MCF 10A (cell line): ENCODE measurements at regions of chr7 and their contacts with region 1.

Region 1: DNA sequence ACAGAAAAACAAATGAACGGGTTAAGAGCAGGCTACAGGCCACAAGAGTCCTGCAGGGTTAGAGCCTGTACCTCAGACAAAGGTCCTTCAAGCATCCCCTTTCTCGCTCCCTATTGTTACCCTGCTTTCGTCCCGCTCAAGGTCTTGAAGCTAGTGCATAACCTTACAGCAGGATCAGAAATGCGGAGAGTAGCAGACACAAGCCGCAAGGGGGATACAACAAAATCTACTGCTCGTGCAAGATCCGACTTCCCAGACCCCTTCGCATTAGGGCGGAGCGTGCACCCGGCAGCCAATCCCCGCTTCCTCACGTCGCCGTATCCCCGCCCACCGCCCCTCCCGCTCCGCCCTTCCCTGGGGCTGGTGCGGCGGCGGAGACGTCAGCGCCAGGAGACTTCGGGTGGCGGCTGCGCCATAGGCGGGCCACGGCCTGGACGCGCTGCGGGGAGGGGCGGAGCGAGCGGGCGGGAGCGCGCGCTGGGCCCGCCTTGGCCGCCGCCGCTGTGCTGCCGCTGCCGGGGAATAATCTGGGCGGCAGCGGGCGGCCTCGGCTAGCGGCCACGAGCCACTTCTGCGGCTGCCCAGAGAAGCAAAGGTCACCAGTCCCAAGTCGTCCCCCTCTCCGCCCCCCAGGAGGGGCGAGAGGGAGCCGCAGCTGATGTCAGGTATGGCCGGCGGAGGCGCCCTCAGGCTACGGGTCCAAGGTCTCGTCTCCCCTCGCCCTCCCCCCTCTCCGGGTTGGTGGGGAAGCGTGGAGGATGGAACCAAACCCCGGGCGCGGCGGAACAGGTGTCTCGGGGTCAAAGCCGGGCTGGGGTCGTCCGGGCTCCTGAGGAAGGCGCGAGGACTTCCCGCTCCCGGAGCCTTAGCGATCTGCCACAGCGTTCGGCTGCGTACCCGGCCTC is at the start of gene C1GALT1:
- DNase-seq: peak; percentile 98
- H3K4me3 Mint-ChIP-seq: peak within 1 kb of the TSS; percentile 98
- H3K27ac Mint-ChIP-seq: peak within 1 kb of the TSS; percentile 94
- H3K4me1 Mint-ChIP-seq: peaks cover 26% of the 10 kb centered on the region
- H3K27me3 Mint-ChIP-seq: no peaks in the 10 kb centered on the region
- CTCF ChIP-seq: peak; percentile 17
- total RNA-seq, gene C1GALT1: 30.9 and 39.6 TPM in 2 replicates

Region 2: DNA sequence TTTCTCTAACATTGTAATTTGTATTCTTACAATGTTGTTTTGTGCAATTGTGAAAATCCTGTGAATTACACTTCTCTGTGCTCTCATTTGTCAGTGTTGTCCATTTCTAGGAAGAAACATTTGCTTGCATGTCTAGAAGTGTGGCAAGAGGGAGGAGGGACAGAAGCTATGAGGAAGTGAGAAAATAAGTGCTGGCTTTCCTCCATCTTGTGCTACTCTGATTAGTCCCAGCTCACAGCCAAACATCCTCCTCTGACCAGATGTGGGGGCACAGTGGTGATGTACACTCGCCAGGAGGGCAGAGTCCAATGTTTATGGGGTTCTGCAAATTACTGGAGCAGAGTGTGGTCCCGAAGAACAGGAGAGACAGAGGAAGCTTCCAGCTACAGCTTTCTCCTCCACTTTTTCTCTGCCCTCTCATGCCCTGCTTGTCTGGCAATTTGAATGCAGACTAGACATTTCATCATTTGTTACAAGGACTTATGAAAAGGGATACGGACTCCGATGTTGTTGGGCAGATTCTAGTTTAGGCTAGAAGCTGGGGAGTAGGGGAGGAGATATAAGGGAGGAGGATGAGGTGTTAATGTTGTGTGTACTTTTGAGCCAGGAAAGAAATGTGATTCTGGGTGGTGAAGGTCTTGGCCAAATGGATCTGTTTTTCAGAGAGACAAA is 131.1 kb before region 1 on chr7:
- CTCF ChIA-PET with region 1: no interaction called
- POLR2A ChIA-PET with region 1: no interaction called
- intact Hi-C with region 1: no loop called
- DNase-seq: no peak
- H3K4me3 Mint-ChIP-seq: no peak overlapping the region
- H3K27ac Mint-ChIP-seq: no peak overlapping the region
- H3K4me1 Mint-ChIP-seq: no peaks in the 10 kb centered on the region
- H3K27me3 Mint-ChIP-seq: no peaks in the 10 kb centered on the region
- CTCF ChIP-seq: no peak

Region 3: DNA sequence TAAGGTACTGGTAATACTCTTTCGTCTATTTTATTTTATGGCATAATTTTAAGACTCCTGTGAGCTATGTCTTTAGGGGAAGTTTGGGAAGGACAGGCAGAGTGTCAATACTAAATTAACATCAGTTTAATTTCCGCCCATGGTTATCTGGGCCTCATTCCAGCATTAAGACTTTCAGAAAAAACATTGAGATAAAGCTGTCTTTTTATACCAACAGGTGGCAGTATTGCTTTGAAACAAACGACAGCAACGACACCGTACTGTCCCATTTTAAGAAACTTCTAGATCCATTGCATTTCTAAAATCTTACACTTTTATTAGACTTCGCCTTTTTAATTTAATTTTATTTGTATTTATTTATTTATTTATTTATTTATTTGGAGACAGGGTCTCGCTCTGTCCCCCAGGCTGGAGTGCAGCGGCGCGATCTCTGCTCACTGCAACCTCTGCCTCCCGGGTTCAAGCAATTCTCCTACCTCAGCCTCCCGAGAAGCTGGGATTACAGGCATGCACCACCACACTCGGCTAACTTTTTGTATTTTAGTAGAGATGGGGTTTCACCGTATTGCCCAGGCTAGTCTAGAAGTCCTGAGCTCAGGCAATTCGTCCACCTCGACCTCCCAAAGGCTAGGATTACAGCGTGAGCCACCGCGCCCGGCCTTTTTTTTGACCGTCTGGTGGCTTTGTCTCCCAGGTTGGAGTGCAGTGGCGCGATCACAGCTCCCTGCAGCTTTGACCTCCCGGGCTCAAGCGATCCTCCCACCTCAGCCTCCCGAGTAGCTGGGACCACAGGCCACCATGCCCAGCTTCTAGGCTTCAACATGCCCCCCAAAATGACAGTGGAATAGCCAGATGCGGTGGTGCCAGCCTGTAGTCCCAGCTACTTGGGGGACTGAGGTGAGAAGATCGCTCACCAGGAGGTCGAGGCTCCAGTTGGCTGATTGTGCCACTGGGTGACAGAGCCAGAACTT is 78.8 kb before region 1 on chr7:
- CTCF ChIA-PET with region 1: interaction called, 111 read pairs
- POLR2A ChIA-PET with region 1: interaction called, 119 read pairs
- intact Hi-C with region 1: loop called (anchors 1 kb)
- DNase-seq: peak; percentile 73
- H3K4me3 Mint-ChIP-seq: no peak overlapping the region
- H3K27ac Mint-ChIP-seq: no peak overlapping the region
- H3K4me1 Mint-ChIP-seq: peaks cover 32% of the 10 kb centered on the region
- H3K27me3 Mint-ChIP-seq: no peaks in the 10 kb centered on the region
- CTCF ChIP-seq: peak; percentile 52

Region 4: DNA sequence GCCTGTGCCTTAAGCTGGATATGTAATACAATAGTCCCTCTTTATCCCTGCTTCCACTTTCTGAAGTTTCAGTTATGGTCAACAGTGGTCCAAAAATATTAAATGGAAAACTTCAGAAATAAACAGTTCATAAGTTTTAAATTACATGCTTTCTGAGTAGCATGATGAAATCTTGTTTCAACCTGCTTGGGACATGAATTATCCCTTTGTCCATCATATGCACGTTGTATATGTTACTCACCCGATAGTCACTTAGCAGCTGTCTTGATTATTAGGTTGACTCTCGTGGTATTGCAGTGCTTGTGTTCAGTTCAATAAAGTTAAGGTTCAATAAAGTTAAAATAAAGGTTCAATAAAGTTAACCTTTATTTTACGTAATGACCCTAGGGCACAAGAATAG is 25.5 kb after region 1 on chr7:
- CTCF ChIA-PET with region 1: interaction called, 3 read pairs
- POLR2A ChIA-PET with region 1: interaction called, 23 read pairs
- intact Hi-C with region 1: no loop called
- DNase-seq: peak; percentile 53
- H3K4me3 Mint-ChIP-seq: peak overlapping the region; percentile 25
- H3K27ac Mint-ChIP-seq: peak overlapping the region; percentile 62
- H3K4me1 Mint-ChIP-seq: peaks cover 22% of the 10 kb centered on the region
- H3K27me3 Mint-ChIP-seq: no peaks in the 10 kb centered on the region
- CTCF ChIP-seq: no peak

Region 5: DNA sequence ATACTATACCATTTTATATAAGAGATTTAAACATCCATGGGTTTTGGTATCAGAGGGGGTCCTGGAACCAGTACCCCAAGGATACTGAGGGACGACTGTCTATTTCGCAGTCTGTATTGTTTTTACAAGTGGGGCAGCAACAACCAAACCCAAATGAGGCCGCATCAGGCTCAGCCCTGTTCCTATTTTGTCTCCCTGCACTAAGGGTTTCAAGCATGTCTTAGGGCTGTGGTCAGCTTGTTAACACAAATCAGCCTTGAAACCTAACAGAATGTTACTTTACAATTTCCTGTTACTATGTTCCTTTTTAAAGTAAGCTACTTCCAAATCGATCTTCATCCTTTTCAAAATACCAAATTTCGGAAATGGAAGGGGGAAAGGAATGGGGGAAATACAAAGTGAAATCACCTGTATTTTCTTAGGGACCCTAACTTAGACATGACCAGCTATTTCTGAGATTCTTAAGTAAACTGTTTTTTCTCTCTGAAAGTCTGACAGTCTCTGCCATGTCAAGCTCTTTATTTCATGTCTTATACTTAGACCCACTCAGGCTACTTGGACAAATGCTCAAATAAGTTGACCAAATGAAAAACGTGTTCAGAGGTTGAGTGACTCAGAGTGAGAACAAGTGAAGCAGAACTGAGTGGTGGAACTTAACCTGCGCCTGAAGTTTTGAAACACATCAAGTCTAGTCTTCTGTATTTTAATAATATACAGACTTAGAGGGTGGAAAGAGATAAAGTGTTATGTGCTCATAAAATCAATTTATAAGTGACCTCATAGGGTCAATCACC is 75.7 kb after region 1 on chr7:
- CTCF ChIA-PET with region 1: interaction called, 3 read pairs
- POLR2A ChIA-PET with region 1: no interaction called
- intact Hi-C with region 1: loop called (anchors 5 kb)
- DNase-seq: no peak
- H3K4me3 Mint-ChIP-seq: no peak overlapping the region
- H3K27ac Mint-ChIP-seq: no peak overlapping the region
- H3K4me1 Mint-ChIP-seq: no peaks in the 10 kb centered on the region
- H3K27me3 Mint-ChIP-seq: no peaks in the 10 kb centered on the region
- CTCF ChIP-seq: no peak

Region 6: GRCh38 chr7:7424151-7424873 is 241.9 kb after region 1 on chr7:
- CTCF ChIA-PET with region 1: interaction called, 4 read pairs
- POLR2A ChIA-PET with region 1: interaction called, 5 read pairs
- intact Hi-C with region 1: loop called (anchors 5 kb)
- DNase-seq: peak; percentile 85
- H3K4me3 Mint-ChIP-seq: peak overlapping the region; percentile 52
- H3K27ac Mint-ChIP-seq: no peak overlapping the region
- H3K4me1 Mint-ChIP-seq: peaks cover 20% of the 10 kb centered on the region
- H3K27me3 Mint-ChIP-seq: no peaks in the 10 kb centered on the region
- CTCF ChIP-seq: peak; percentile 89

Region 7: DNA sequence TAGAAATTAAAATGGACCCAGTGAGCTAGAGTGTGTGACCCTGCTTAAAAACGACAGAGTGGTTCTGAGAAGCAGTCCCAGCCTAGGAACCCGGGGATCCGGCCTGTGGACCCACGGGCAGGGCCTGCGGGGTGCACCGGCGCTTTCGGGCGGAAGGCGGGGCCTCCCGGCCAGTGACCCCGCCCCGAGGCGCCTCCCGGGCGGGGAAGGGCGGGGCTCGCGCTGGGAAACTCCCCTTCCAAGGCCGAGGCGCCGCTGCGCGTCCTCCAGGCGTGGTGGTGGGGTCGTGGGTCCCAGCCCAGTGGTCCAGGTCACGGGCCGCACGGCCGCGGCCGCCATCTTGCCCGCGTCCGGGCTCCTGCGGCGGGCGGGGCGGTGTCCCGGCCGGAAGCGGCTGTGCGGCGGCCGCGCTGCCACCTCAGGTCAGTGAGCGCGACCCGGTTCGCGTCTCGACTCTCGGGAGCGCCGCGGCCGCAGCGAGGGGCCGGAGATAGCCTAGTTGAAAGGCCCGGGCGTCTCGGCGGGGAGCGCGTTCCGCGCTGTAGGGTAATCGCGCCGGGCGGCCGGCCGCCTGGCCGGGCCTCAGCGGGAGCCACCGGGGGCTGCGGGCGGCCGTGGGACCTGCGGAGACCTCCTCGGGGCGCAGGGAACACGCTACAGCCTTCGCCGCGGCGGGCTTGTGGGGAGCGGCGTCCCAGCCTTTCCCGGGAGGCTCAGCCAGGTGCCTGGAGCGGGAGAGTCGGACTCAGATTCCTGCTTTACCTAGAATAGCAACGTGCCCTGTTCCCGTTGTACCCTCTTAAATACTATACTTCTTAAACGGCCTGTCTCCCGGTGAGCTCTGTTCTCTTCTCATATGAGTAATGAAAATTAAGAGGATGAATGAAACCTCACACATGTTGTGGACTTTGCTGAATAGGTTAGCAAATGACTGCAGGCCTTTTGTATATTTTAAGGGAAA is 384.5 kb after region 1 on chr7 and contains the start of gene MIOS:
- CTCF ChIA-PET with region 1: interaction called, 4 read pairs
- POLR2A ChIA-PET with region 1: interaction called, 11 read pairs
- intact Hi-C with region 1: no loop called
- DNase-seq: peak; percentile 81
- H3K4me3 Mint-ChIP-seq: no peak within 1 kb of the TSS
- H3K27ac Mint-ChIP-seq: peak within 1 kb of the TSS; percentile 72
- H3K4me1 Mint-ChIP-seq: peaks cover 17% of the 10 kb centered on the region
- H3K27me3 Mint-ChIP-seq: no peaks in the 10 kb centered on the region
- CTCF ChIP-seq: no peak
- total RNA-seq, gene MIOS: 43.5 and 65.4 TPM in 2 replicates

Region 8: DNA sequence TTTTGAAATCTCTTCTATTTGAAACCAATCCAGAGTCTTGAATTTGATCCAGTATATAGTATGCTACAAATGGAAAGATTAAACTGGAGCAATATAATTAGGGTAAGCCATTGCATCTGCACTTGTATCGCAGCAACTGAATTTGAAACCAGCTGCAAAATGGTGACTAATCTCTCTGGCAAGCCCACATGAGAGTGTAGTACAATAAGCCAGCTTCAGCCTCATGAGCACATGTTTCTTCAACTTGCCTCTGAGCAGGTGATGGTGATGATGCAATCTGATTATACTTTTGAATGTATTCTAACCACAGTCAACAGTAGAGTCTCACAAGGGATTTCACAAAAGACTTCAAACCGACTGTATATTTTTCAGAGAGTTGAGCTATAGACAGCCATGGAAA is 536.8 kb after region 1 on chr7:
- CTCF ChIA-PET with region 1: no interaction called
- POLR2A ChIA-PET with region 1: no interaction called
- intact Hi-C with region 1: no loop called
- DNase-seq: peak; percentile 96
- H3K4me3 Mint-ChIP-seq: peak overlapping the region; percentile 55
- H3K27ac Mint-ChIP-seq: peak overlapping the region; percentile 90
- H3K4me1 Mint-ChIP-seq: peaks cover 18% of the 10 kb centered on the region
- H3K27me3 Mint-ChIP-seq: no peaks in the 10 kb centered on the region
- CTCF ChIP-seq: no peak